ENCODE measurements at regions of chr2 and their contacts with region 1.

Region 1: DNA sequence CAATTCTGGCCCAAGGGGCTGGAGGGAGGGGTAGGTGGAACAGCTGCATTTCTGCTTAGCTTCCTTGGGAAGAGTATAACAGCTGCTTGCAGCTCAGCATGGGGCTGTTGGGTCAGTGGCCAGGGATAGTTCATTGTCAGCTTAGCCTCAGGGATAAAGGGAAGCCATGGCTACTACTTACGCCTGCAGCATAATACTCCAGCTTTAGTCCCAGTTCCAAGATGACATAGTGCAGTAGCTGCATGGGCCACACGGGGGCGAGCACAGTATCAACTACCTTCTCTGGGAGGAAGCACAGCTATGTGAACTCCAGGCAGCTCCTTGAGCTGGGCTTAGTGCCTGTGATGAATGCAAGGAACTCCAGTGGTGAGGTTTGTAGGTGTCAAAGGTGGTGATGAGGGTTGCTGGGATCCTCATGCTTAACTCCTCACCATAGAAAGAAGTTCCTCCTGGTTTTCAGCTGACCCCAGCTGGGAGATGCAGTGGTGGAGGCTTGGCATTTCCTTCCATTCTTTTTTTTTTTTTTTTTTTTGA is 35.4 kb upstream of the RHOB start:
- DNase-seq: peak; percentile 83
- H3K4me3 ChIP-seq: no peak overlapping the region
- H3K27ac ChIP-seq: no peak overlapping the region
- H3K4me1 ChIP-seq: no peaks in the 10 kb centered on the region
- H3K27me3 ChIP-seq: peaks cover 9 to 12% of the 10 kb centered on the region in 2 experiments
- CTCF ChIP-seq: peak; percentile 88 to 90
- POLR2A ChIP-seq: no peak

Region 2: DNA sequence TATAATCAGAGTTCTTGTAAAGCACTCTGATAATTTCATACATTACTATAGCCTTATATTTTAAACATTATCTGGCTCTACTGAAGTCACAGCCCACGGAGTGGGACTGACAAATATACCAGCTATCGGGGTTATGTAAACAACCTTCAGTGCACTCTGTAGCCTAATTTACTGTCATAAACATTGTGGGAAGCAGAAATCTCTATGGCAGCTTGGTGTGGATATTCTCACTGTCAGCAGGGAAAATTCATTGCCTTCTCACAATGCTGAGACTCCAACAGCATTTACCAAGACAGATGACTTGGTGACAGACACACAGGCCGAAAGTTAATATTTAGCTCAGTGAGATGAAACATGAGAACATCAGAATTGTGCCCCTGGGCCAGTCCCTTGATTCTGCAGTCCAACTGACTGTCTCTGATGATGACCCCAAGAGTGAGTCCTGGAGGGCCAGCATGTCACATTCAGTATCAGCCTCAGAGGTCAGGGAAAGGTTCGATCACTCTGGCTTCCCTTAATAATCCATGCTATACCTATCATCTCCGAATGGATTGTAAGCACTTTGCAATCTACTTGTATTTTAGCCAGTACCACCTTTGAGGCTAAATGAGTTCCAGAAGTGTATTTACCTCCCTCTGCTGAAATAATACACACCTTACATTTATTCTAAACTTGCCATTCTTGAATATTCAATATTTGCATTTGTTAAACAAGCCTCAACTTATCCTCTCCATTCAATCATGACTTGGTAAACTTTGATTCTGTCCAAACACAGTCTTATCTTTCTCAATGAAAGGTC is 906.8 kb before region 1 on chr2:
- CTCF ChIA-PET with region 1: no interaction called
- POLR2A ChIA-PET with region 1: no interaction called
- dilution Hi-C with region 1: no loop called
- intact Hi-C with region 1: no loop called
- DNase-seq: no peak
- H3K4me3 ChIP-seq: no peak overlapping the region
- H3K27ac ChIP-seq: no peak overlapping the region
- H3K4me1 ChIP-seq: no peaks in the 10 kb centered on the region
- H3K27me3 ChIP-seq: no peaks in the 10 kb centered on the region
- CTCF ChIP-seq: no peak
- POLR2A ChIP-seq: no peak

Region 3: GRCh38 chr2:20398956-20399567 is 12.4 kb before region 1 on chr2:
- CTCF ChIA-PET with region 1: interaction called, 18 read pairs
- POLR2A ChIA-PET with region 1: no interaction called
- dilution Hi-C with region 1: no loop called
- intact Hi-C with region 1: no loop called
- DNase-seq: no peak
- H3K4me3 ChIP-seq: no peak overlapping the region
- H3K27ac ChIP-seq: no peak overlapping the region
- H3K4me1 ChIP-seq: no peaks in the 10 kb centered on the region
- H3K27me3 ChIP-seq: peaks cover 21% of the 10 kb centered on the region in 2 experiments
- CTCF ChIP-seq: no peak
- POLR2A ChIP-seq: no peak

Region 4: GRCh38 chr2:20433249-20433648 is 21.8 kb after region 1 on chr2:
- CTCF ChIA-PET with region 1: interaction called, 150 read pairs
- POLR2A ChIA-PET with region 1: no interaction called
- dilution Hi-C with region 1: no loop called
- intact Hi-C with region 1: no loop called
- DNase-seq: no peak
- H3K4me3 ChIP-seq: no peak overlapping the region
- H3K27ac ChIP-seq: no peak overlapping the region
- H3K4me1 ChIP-seq: peaks cover 2% of the 10 kb centered on the region
- H3K27me3 ChIP-seq: peaks cover 4 to 9% of the 10 kb centered on the region in 2 experiments
- CTCF ChIP-seq: no peak
- POLR2A ChIP-seq: no peak

Region 5: GRCh38 chr2:20642055-20642971 is 230.9 kb after region 1 on chr2:
- CTCF ChIA-PET with region 1: interaction called, 225 read pairs
- POLR2A ChIA-PET with region 1: interaction called, 5 read pairs
- dilution Hi-C with region 1: no loop called
- intact Hi-C with region 1: loop called (anchors 1 kb)
- DNase-seq: peak; percentile 76
- H3K4me3 ChIP-seq: no peak overlapping the region
- H3K27ac ChIP-seq: no peak overlapping the region
- H3K4me1 ChIP-seq: peaks cover 8% of the 10 kb centered on the region
- H3K27me3 ChIP-seq: no peaks in the 10 kb centered on the region
- CTCF ChIP-seq: peak; percentile 98 to 99
- POLR2A ChIP-seq: no peak